Activated naive CD4-positive, alpha-beta T cell treated with anti-CD3 and anti-CD28 coated beads, Interleukin-2, amount 10 ng/mL, durations not matched to agents 7 days and 5 days (primary cell): ENCODE measurements at regions of chr6 and their contacts with region 1.

Region 1: DNA sequence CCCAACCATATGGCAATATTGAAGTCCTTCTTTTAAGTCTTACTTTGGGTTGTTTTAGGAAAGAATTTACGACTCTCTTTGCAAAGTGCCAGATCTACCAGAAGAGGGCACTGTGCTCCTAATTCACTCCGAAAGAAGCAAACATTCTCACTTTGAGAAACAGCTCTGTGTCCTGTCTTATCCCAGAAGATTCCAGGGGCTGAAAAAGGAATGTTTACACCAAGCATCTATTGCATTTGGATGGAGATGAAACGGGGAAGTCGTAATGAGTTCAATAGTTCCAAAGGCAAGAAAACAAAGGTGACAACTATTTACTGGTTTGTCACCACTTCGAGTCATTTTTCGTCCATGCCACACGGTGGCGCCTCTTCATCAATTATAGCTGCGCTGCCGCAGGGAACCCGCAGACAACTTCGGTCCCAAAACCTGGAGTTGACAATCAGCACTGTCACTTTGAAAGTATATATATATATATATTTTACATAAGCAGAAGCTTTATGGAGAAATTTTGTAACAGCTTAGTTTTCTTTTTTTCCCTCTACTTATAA is 121.6 kb downstream of the MOXD1 start:
- DNase-seq: peak; percentile 79
- H3K4me3 Mint-ChIP-seq: peak overlapping the region; percentile 70
- H3K27ac Mint-ChIP-seq: no peak overlapping the region
- H3K4me1 Mint-ChIP-seq: no peaks in the 10 kb centered on the region
- H3K27me3 Mint-ChIP-seq: peaks cover 11% of the 10 kb centered on the region

Region 2: GRCh38 chr6:132289756-132290155 is 10.1 kb after region 1 on chr6:
- CTCF ChIA-PET with region 1: interaction called, 48 read pairs
- DNase-seq: no peak
- H3K4me3 Mint-ChIP-seq: no peak overlapping the region
- H3K27ac Mint-ChIP-seq: no peak overlapping the region
- H3K4me1 Mint-ChIP-seq: no peaks in the 10 kb centered on the region
- H3K27me3 Mint-ChIP-seq: peaks cover 11% of the 10 kb centered on the region

Region 3: GRCh38 chr6:132300323-132300949 is 20.8 kb after region 1 on chr6:
- CTCF ChIA-PET with region 1: interaction called, 41 read pairs
- DNase-seq: peak; percentile 25
- H3K4me3 Mint-ChIP-seq: no peak overlapping the region
- H3K27ac Mint-ChIP-seq: no peak overlapping the region
- H3K4me1 Mint-ChIP-seq: no peaks in the 10 kb centered on the region
- H3K27me3 Mint-ChIP-seq: peaks cover 8% of the 10 kb centered on the region

Region 4: GRCh38 chr6:132483779-132484679 is 204.4 kb after region 1 on chr6:
- CTCF ChIA-PET with region 1: interaction called, 117 read pairs
- DNase-seq: peak; percentile 52
- H3K4me3 Mint-ChIP-seq: no peak overlapping the region
- H3K27ac Mint-ChIP-seq: no peak overlapping the region
- H3K4me1 Mint-ChIP-seq: peaks cover 9% of the 10 kb centered on the region
- H3K27me3 Mint-ChIP-seq: no peaks in the 10 kb centered on the region

Region 5: DNA sequence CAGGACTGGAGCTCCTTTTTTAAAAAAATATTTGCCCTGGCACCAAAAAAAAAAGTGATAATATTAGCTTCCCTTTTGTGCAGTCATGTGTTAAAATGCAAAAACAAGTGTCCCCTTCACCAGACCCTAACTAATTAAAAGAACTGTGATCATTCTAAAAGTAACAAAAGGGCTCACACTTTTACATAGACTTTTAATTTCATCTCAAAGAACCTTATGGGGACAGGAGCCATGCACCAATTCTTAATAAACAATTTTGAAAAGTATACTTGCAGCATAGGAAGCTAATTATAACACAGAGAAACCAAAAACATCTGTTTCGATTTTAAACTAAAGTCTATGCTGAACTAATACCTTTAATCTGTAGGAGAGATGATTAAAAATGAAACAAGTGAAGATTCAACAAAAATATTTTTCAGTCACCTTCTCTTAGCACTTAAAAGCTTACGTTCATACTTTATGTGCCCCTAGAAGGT is 216.0 kb after region 1 on chr6:
- CTCF ChIA-PET with region 1: interaction called, 12 read pairs
- DNase-seq: no peak
- H3K4me3 Mint-ChIP-seq: no peak overlapping the region
- H3K27ac Mint-ChIP-seq: peak overlapping the region; percentile 4
- H3K4me1 Mint-ChIP-seq: peaks cover 26% of the 10 kb centered on the region
- H3K27me3 Mint-ChIP-seq: no peaks in the 10 kb centered on the region

Region 6: GRCh38 chr6:132512638-132513632 is 233.3 kb after region 1 on chr6 and contains the start of gene STX7:
- CTCF ChIA-PET with region 1: interaction called, 12 read pairs
- DNase-seq: peak; percentile 91
- H3K4me3 Mint-ChIP-seq: peak within 1 kb of the TSS; percentile 91
- H3K27ac Mint-ChIP-seq: peak within 1 kb of the TSS; percentile 88
- H3K4me1 Mint-ChIP-seq: peaks cover 26% of the 10 kb centered on the region
- H3K27me3 Mint-ChIP-seq: peaks cover 16% of the 10 kb centered on the region